A673 (cell line): ENCODE measurements at regions of chrX and their contacts with region 1.

Region 1: GRCh38 chrX:153947009-153947769 is 2.7 kb upstream of the RENBP start:
- DNase-seq: peak; percentile 91
- H3K4me3 ChIP-seq: no peak overlapping the region
- H3K27ac ChIP-seq: no peak overlapping the region
- H3K4me1 ChIP-seq: no peaks in the 10 kb centered on the region
- H3K27me3 ChIP-seq: no peaks in the 10 kb centered on the region
- CTCF ChIP-seq: peak; percentile 96

Region 2: GRCh38 chrX:152958524-152959465 is 988.4 kb before region 1 on chrX:
- CTCF ChIA-PET with region 1: no interaction called
- POLR2A ChIA-PET with region 1: no interaction called
- intact Hi-C with region 1: loop called (anchors 5 kb)
- DNase-seq: peak; percentile 91
- H3K4me3 ChIP-seq: no peak overlapping the region
- H3K27ac ChIP-seq: no peak overlapping the region
- H3K4me1 ChIP-seq: no peaks in the 10 kb centered on the region
- H3K27me3 ChIP-seq: no peaks in the 10 kb centered on the region
- CTCF ChIP-seq: peak; percentile 89

Region 3: GRCh38 chrX:153763989-153764755 is 183.0 kb before region 1 on chrX and contains the start of gene PLXNB3:
- CTCF ChIA-PET with region 1: no interaction called
- POLR2A ChIA-PET with region 1: no interaction called
- intact Hi-C with region 1: loop called (anchors 1 kb)
- DNase-seq: peak; percentile 71
- H3K4me3 ChIP-seq: no peak within 1 kb of the TSS
- H3K27ac ChIP-seq: no peak within 1 kb of the TSS
- H3K4me1 ChIP-seq: no peaks in the 10 kb centered on the region
- H3K27me3 ChIP-seq: no peaks in the 10 kb centered on the region
- CTCF ChIP-seq: peak; percentile 91
- total RNA-seq, gene PLXNB3: 0.59 TPM in 1 of 2 replicates, not detected in the other

Region 4: DNA sequence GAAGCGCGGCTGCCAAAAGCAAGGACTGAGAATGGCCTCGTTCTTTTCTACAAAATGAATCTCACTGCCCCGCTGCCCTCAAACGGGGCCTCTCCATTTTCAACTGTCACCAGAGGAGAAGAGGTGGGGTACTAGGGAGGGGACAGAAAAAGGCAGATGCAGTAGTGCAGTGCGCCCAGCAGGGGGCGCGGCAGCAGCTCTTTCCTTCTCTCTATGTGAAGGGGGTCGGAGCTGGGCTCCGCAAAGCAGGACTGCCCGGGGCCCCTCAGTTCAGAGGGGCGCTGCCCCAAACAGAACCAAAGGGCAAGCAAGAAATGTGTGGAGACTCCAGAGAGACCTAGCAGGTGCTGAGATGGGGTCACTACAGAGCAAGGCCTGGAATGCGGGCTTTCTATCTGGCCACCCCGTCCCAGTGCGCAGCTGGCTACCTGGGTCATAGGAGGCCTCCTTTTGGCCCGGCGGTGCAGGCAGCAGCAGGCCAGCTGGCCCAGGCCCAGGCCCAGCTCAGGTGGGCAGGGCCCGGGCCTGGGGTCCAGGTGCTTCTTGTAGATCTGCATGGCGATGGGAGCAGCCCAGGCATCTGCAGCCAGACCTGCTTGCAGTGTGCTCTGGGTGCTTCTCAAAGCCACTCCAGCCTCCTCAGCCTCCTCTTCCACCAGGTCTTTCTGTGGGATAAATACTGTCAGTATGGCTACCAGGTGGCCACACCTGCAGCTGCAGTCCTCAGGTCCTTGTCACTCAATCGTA is 66.6 kb after region 1 on chrX:
- CTCF ChIA-PET with region 1: no interaction called
- POLR2A ChIA-PET with region 1: no interaction called
- intact Hi-C with region 1: no loop called
- DNase-seq: peak; percentile 65
- H3K4me3 ChIP-seq: no peak overlapping the region
- H3K27ac ChIP-seq: no peak overlapping the region
- H3K4me1 ChIP-seq: no peaks in the 10 kb centered on the region
- H3K27me3 ChIP-seq: no peaks in the 10 kb centered on the region
- CTCF ChIP-seq: peak; percentile 96

Region 5: GRCh38 chrX:154037754-154038153 is 90.6 kb after region 1 on chrX:
- CTCF ChIA-PET with region 1: interaction called, 10 read pairs
- POLR2A ChIA-PET with region 1: no interaction called
- intact Hi-C with region 1: no loop called
- DNase-seq: no peak
- H3K4me3 ChIP-seq: no peak overlapping the region
- H3K27ac ChIP-seq: no peak overlapping the region
- H3K4me1 ChIP-seq: peaks cover 1% of the 10 kb centered on the region
- H3K27me3 ChIP-seq: peaks cover 7% of the 10 kb centered on the region
- CTCF ChIP-seq: no peak

Region 6: GRCh38 chrX:154534862-154535670 is 587.9 kb after region 1 on chrX:
- CTCF ChIA-PET with region 1: no interaction called
- POLR2A ChIA-PET with region 1: no interaction called
- intact Hi-C with region 1: loop called (anchors 10 kb)
- DNase-seq: peak; percentile 92
- H3K4me3 ChIP-seq: no peak overlapping the region
- H3K27ac ChIP-seq: no peak overlapping the region
- H3K4me1 ChIP-seq: peaks cover 4% of the 10 kb centered on the region
- H3K27me3 ChIP-seq: no peaks in the 10 kb centered on the region
- CTCF ChIP-seq: peak; percentile 100